PC-9 (cell line): ENCODE measurements at regions of chr3 and their contacts with region 1.

Region 1: GRCh38 chr3:54870423-54870822 is 57.4 kb downstream of the LRTM1 start:
- DNase-seq: peak; percentile 48 to 72
- H3K4me3 ChIP-seq: no peak overlapping the region
- H3K27ac ChIP-seq: no peak overlapping the region; the same call in 1 of the 2 replicates
- H3K4me1 ChIP-seq: peaks cover 17% of the 10 kb centered on the region
- H3K27me3 ChIP-seq: no peaks in the 10 kb centered on the region
- CTCF ChIP-seq: peak; percentile 68

Region 2: GRCh38 chr3:54443561-54444161 is 426.8 kb before region 1 on chr3:
- CTCF ChIA-PET with region 1: no interaction called
- POLR2A ChIA-PET with region 1: no interaction called
- intact Hi-C with region 1: no loop called
- DNase-seq: no peak
- H3K4me3 ChIP-seq: no peak overlapping the region
- H3K27ac ChIP-seq: no peak overlapping the region
- H3K4me1 ChIP-seq: no peaks in the 10 kb centered on the region
- H3K27me3 ChIP-seq: no peaks in the 10 kb centered on the region
- CTCF ChIP-seq: no peak

Region 3: GRCh38 chr3:54891548-54892120 is 21.2 kb after region 1 on chr3:
- CTCF ChIA-PET with region 1: no interaction called
- POLR2A ChIA-PET with region 1: no interaction called
- intact Hi-C with region 1: no loop called
- DNase-seq: peak; percentile 91 to 97
- H3K4me3 ChIP-seq: no peak overlapping the region; the same call in 1 of the 2 replicates
- H3K27ac ChIP-seq: peak overlapping the region; percentile 69
- H3K4me1 ChIP-seq: peaks cover 25% of the 10 kb centered on the region
- H3K27me3 ChIP-seq: no peaks in the 10 kb centered on the region
- CTCF ChIP-seq: peak; percentile 48

Region 4: GRCh38 chr3:54994101-54994513 is 123.7 kb after region 1 on chr3:
- CTCF ChIA-PET with region 1: no interaction called
- POLR2A ChIA-PET with region 1: interaction called, 4 read pairs
- intact Hi-C with region 1: loop called (anchors 1 kb)
- DNase-seq: no peak
- H3K4me3 ChIP-seq: no peak overlapping the region
- H3K27ac ChIP-seq: no peak overlapping the region
- H3K4me1 ChIP-seq: no peaks in the 10 kb centered on the region
- H3K27me3 ChIP-seq: no peaks in the 10 kb centered on the region
- CTCF ChIP-seq: no peak

Region 5: DNA sequence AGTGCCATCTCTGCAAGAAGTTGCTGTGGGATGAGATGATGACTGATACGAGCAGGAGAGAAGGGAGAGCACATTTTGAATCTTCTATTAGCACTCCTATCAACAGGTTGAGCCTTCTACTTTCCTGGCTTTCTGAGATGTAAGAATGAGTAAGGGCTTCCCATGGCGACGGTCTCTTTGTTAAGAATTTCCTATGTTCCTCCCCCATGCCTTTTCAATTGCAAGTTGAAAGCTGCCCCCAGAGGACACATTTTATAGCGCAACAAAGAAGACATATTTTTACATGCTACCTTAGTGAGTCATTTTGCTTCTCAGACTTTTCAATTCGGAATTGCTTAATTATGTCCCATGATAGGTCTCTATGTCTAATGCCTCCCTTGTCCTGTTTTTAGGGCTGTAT is 128.7 kb after region 1 on chr3:
- CTCF ChIA-PET with region 1: no interaction called
- POLR2A ChIA-PET with region 1: no interaction called
- intact Hi-C with region 1: loop called (anchors 1 kb)
- DNase-seq: peak; percentile 33 to 71
- H3K4me3 ChIP-seq: no peak overlapping the region
- H3K27ac ChIP-seq: no peak overlapping the region
- H3K4me1 ChIP-seq: peaks cover 4% of the 10 kb centered on the region; the same call in 1 of the 2 replicates
- H3K27me3 ChIP-seq: no peaks in the 10 kb centered on the region
- CTCF ChIP-seq: peak; percentile 48; the same call in 1 of the 2 replicates

Region 6: GRCh38 chr3:55107187-55107586 is 236.8 kb after region 1 on chr3:
- CTCF ChIA-PET with region 1: no interaction called
- POLR2A ChIA-PET with region 1: no interaction called
- intact Hi-C with region 1: no loop called
- DNase-seq: no peak
- H3K4me3 ChIP-seq: no peak overlapping the region
- H3K27ac ChIP-seq: no peak overlapping the region
- H3K4me1 ChIP-seq: no peaks in the 10 kb centered on the region
- H3K27me3 ChIP-seq: no peaks in the 10 kb centered on the region
- CTCF ChIP-seq: no peak